Sigmoid colon (tissue), 7 donors: ENCODE measurements at regions of chr4 and their contacts with region 1.

Region 1: DNA sequence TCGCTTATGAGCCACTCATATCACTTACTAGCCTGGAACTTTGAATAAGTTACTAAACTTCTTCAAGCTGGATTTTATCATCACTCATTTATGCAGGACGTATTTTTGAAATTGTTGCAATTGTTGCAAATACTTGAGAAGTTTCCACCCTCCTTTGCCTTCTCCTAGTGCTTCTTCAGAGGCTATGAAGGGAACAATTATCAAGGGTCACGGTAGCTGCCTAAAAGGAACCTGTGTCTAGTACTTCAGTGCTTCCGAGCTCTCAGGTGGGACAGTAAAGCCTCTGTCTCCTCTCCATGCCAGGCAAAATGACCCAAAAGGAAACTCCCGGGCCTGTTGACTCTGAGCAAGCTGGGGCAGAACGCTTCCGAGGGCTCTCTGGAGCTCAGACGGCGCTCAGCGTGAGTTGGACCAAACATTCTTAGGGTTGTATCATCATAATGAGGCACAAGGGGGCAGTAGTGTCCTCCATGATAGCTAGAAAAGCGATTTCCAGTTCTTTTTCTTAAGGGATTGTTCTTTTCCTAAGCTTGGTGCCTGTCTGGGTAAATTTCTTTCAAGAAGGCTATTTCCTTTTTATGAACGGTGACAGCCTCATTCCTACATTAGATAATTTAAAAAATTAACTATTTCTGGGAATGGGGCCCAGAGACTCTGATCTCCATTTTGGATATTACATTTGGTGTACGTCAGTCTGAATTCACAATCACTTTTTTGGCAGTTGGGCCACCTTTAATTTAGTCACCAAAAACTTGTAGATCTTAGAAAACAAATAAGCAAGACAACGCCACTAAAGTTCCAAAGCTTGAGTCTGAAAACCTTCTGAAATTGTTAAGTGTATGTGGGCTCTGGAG is 73.1 kb downstream of the PACRGL start:
- DNase-seq: peak; percentile 71
- H3K4me3 ChIP-seq: no peak overlapping the region
- H3K27ac ChIP-seq: peak overlapping the region in 2 of 4 donors; percentile 20
- H3K4me1 ChIP-seq: peaks cover 0 to 24% (median 13%) of the 10 kb centered on the region in 4 donors
- H3K27me3 ChIP-seq: no peaks in the 10 kb centered on the region
- CTCF ChIP-seq: peak; percentile 59 to 78 (median 66)
- EP300 ChIP-seq: no peak
- POLR2A ChIP-seq: no peak

Region 2: DNA sequence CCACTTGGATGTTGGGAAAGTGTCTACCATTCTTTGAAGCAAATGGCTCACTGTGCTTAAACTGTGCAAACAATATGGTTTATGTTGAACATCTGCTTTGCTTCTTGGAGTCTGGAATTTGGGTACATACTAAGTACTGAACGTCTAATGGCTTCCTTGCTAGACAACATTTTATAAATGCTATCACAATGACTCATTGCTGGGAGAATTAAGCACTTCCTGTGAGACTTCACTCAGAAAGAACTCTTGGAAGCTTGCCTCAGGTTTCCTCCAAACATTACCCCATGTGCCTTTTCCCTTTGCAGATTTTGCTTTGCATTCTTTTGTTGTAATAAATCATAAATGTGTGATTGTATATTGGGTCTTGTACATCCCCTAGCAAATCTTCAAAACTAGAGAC is 66.6 kb after region 1 on chr4:
- intact Hi-C with region 1: no loop called
- DNase-seq: no peak
- H3K4me3 ChIP-seq: no peak overlapping the region
- H3K27ac ChIP-seq: no peak overlapping the region
- H3K4me1 ChIP-seq: peaks cover 0 to 11% (median 7%) of the 10 kb centered on the region in 4 donors
- H3K27me3 ChIP-seq: no peaks in the 10 kb centered on the region
- CTCF ChIP-seq: no peak
- EP300 ChIP-seq: no peak
- POLR2A ChIP-seq: no peak

Region 3: GRCh38 chr4:20983763-20984575 is 210.6 kb after region 1 on chr4:
- intact Hi-C with region 1: loop called (anchors 10 kb)
- DNase-seq: peak; percentile 74
- H3K4me3 ChIP-seq: peak overlapping the region; percentile 45 to 55 (median 48)
- H3K27ac ChIP-seq: peak overlapping the region in 3 of 4 donors; percentile 65 to 80 (median 74)
- H3K4me1 ChIP-seq: peaks cover 0 to 29% (median 11%) of the 10 kb centered on the region in 4 donors
- H3K27me3 ChIP-seq: no peaks in the 10 kb centered on the region
- CTCF ChIP-seq: no peak
- EP300 ChIP-seq: no peak
- POLR2A ChIP-seq: no peak

Region 4: GRCh38 chr4:21134994-21135393 is 361.6 kb after region 1 on chr4:
- intact Hi-C with region 1: loop called (anchors 1 kb)
- DNase-seq: no peak
- H3K4me3 ChIP-seq: no peak overlapping the region
- H3K27ac ChIP-seq: no peak overlapping the region
- H3K4me1 ChIP-seq: no peaks in the 10 kb centered on the region
- H3K27me3 ChIP-seq: no peaks in the 10 kb centered on the region
- CTCF ChIP-seq: peak in 3 of 4 experiments; percentile 32 to 45 (median 37)
- EP300 ChIP-seq: no peak
- POLR2A ChIP-seq: no peak

Region 5: DNA sequence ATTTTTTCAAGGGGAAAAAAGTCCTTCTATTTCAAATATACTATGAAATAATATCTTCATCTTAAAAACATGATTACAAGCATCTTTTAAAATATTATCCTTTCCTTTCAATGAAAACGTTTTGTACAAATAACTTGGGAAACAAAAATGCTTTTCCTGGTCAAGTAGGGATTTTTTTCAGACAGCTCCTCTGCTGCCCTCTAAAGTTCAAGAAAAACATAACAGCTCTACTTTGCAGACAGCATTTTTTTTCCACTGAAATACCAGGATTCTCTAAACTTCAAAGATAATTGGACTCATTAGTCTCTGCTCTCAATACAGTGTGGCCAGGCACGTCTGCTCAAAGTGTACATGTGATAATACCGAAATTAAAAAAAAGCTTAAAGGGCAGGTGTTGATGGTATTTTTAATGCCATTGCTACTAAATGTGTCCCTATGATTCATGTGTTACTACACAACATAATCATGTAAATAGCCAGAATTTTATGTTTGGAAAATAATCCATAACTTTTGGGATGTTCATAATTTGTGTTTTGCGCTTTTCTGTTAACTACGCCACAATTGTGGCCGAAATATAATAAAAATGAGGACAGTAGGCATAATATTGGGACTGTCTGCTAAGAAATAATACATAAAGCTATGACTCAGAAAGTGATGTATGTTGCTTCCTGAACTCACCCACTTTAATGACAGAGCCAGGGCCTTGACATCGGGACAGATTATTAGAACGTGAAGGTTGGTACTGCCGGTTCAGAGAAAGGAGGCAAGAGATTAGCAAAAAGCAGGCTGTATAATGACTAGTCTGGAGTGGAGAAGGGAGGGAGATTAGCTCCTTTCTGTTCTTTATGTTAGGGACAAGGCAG is 696.3 kb after region 1 on chr4:
- intact Hi-C with region 1: loop called (anchors 2 kb)
- DNase-seq: no peak
- H3K4me3 ChIP-seq: no peak overlapping the region
- H3K27ac ChIP-seq: no peak overlapping the region
- H3K4me1 ChIP-seq: no peaks in the 10 kb centered on the region
- H3K27me3 ChIP-seq: no peaks in the 10 kb centered on the region
- CTCF ChIP-seq: peak in 3 of 4 experiments; percentile 26 to 55 (median 31)
- EP300 ChIP-seq: no peak
- POLR2A ChIP-seq: no peak